ENCODE measurements at regions of chr4 and their contacts with region 1.

Region 1: GRCh38 chr4:38078590-38079421 is 118.6 kb downstream of the PTTG2 start:
- DNase-seq: no peak
- H3K4me3 ChIP-seq: no peak overlapping the region
- H3K27ac ChIP-seq: peak overlapping the region; percentile 62 to 66 (median 64)
- H3K4me1 ChIP-seq: peaks cover 7 to 47% (median 24%) of the 10 kb centered on the region in 3 donors
- H3K27me3 ChIP-seq: no peaks in the 10 kb centered on the region
- CTCF ChIP-seq: no peak
- POLR2A ChIP-seq: no peak

Region 2: DNA sequence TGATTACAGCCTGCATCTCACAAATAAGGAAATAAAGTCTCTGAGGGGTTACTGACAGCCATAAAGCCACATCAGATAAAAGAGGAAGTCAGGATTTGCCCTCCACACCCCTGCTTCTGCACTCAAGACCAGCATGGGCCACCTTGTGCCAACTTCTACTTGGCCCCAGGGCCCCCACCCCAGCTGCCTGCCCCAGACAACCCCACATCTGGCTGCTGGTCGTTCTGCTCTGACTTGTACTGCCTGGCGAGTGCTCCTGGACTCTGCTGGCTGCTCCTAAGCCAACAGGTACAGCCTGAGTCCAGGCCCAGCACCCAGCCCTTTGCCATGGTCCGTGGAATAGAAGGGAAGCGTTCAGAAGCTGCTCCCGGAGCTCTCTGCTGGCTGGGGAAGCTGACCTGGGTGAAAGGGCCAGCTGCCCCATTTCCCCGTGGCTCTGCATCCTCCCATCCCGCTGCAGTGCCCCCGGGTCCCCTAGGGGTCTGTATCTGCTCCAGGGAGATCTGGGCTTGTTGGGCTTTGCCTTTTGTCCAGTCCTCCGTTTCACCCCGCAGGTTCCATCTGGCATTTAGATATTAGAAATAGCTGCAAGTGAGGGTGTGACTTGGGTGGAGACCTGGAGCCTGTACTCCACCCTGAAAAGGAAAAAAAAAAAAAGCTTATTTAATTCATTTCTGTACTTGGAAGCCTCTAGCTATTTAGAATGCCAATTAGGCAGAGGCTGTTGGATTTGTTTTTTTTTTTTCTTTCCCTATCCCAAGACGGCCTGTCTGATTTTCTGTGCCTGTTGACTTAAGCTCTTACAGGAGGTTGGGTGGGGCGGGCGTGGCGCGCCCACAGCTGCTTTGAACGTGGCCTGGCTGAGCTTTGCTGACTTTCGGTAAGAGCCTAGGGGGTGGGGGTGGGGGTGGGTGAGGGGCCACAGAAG is 76.1 kb after region 1 on chr4:
- intact Hi-C with region 1: loop called (anchors 10 kb)
- DNase-seq: no peak
- H3K4me3 ChIP-seq: peak overlapping the region in 1 of 4 donors; percentile 42
- H3K27ac ChIP-seq: peak overlapping the region; percentile 75 to 89 (median 86)
- H3K4me1 ChIP-seq: peaks cover 24 to 77% (median 36%) of the 10 kb centered on the region in 3 donors
- H3K27me3 ChIP-seq: no peaks in the 10 kb centered on the region
- CTCF ChIP-seq: no peak
- POLR2A ChIP-seq: no peak

Measured in esophagus squamous epithelium (tissue), 5 donors.